Activated CD4-positive, alpha-beta T cell treated with anti-CD3 and anti-CD28 coated beads for 36 hours (primary cell): ENCODE measurements at regions of chr16 and their contacts with region 1.

Region 1: DNA sequence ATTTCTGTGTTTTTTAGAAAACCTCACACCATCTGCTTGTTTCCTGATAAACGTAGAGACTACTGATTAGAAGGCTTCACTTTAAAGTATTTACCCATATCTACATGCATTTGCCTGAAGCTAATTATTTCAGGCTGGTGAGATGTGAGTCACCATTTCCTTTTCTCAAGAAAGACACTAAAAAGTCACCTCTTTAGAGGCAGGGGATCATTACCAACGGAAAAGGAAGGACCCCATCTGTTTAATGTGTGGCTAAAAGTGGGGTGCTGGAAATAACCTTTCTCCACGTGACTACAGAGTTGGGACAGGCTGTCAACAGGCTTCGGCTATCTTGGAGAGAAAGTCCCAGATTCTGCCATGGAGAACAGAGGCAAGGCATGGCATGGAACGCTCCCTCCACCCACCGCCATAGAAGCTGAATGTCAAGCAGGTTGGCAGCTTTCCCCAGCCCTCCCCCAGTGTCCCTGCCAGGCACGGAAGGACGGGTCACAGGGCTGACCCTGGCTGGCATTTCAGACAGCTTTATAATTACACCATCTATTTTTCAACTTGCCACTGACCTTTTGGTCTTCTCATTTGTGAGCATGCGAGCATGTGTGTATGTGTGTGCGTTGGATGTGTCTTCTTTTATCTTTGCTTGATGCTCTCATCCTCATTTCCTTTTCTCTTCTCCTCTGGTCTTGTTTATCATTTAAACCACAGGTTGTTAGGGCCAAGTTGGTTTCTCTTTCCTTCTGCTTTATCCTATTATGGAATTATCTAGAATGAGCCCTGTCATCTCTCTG is 157.0 kb downstream of the CPPED1 start:
- DNase-seq: peak; percentile 56
- ATAC-seq: peak; percentile 79
- H3K4me3 Mint-ChIP-seq: peak overlapping the region; percentile 37
- H3K27ac Mint-ChIP-seq: peak overlapping the region; percentile 92
- H3K4me1 Mint-ChIP-seq: peaks cover 22% of the 10 kb centered on the region
- H3K27me3 Mint-ChIP-seq: peaks cover 4% of the 10 kb centered on the region

Region 2: DNA sequence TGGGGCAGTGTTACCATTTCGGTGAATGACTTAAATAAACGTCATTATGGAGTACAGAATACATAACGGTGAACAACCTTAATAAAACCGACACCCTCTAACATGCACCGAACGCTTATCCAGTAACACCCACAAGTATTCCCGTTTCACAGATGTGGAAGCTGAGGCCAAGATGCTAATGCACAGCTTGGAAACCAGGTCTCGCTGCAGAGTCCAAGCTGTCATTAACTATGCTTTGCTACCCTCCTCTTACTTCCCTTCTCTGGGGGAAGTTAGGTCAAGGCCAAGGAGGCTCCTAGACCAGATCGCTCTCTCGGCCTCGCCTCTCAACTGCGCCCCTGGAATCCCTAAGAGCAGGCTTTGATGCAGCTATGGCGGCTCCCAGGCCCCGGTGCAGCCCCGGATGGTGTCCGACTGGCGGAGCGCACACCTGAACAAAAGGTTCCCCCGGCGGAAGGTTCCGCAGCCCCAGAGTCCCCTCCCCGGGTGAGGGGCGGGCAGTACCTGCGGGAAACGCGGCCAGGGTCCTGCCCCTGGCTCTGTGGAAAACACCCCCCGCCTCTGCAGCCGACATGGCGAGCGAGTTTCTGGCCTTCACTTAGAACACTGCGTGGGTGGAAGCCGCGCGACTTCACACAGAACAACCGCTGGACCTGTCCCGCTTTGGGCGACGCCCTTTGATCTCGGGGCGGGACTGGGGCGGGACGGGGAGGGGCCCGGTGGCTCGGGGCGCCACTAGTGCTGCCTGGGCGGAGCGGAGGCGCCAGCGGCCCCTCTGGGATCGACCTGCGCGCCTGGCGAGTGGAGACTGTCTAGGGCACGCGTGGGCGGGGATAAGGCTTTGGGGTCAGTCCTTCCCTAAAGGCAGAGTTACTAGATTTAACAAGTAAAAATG is 156.8 kb after region 1 on chr16 and contains the start of gene CPPED1:
- CTCF ChIA-PET with region 1: interaction called, 4 read pairs
- POLR2A ChIA-PET with region 1: no interaction called
- intact Hi-C with region 1: loop called in 1 of 2 experiments (anchors 1 kb)
- DNase-seq: peak; percentile 95
- ATAC-seq: peak; percentile 93
- H3K4me3 Mint-ChIP-seq: peak within 1 kb of the TSS; percentile 97
- H3K27ac Mint-ChIP-seq: peak within 1 kb of the TSS; percentile 92
- H3K4me1 Mint-ChIP-seq: peaks cover 28% of the 10 kb centered on the region
- H3K27me3 Mint-ChIP-seq: no peaks in the 10 kb centered on the region
- total RNA-seq, gene CPPED1: 8.0 to 9.8 TPM

Region 3: GRCh38 chr16:13344001-13344400 is 697.3 kb after region 1 on chr16:
- CTCF ChIA-PET with region 1: no interaction called
- POLR2A ChIA-PET with region 1: no interaction called
- intact Hi-C with region 1: no loop called
- DNase-seq: no peak
- ATAC-seq: no peak
- H3K4me3 Mint-ChIP-seq: no peak overlapping the region
- H3K27ac Mint-ChIP-seq: no peak overlapping the region
- H3K4me1 Mint-ChIP-seq: no peaks in the 10 kb centered on the region
- H3K27me3 Mint-ChIP-seq: peaks cover 2% of the 10 kb centered on the region